Heart right ventricle (tissue), 16 donors: ENCODE measurements at regions of chr3 and their contacts with region 1.

Region 1: DNA sequence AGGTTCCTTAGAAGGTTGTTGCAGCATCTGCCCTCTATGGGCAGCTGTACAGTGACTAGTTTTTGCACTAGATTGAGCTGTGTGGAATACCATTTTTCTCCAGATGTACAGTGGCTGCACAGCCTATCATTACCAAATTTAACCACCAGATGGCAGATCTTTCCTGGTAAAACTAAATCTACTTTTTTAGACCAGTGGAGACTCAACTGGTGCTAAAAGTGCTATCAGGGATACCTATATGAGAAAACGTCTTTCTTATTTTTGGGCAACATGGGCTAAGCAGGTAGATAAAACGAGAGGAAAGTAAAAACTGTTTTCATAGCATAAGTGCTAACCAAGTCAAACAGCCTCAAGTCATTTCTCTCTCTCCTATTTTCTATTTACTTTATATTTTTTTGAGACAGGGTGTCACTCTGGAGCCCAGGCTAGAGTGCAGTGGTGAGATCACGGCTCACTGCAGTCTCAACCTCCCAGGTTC is 21.2 kb downstream of the IGSF10 start:
- DNase-seq: peak in 1 of 2 donors; percentile 28
- ATAC-seq: peak in 7 of 8 donors; percentile 52 to 87 (median 78)
- H3K4me3 ChIP-seq: no peak overlapping the region
- H3K27ac ChIP-seq: no peak overlapping the region
- H3K4me1 ChIP-seq: peaks cover 0 to under 1% (median 0%) of the 10 kb centered on the region in 9 donors
- H3K27me3 ChIP-seq: no peaks in the 10 kb centered on the region
- CTCF ChIP-seq: peak; percentile 65 to 86 (median 79)

Region 2: DNA sequence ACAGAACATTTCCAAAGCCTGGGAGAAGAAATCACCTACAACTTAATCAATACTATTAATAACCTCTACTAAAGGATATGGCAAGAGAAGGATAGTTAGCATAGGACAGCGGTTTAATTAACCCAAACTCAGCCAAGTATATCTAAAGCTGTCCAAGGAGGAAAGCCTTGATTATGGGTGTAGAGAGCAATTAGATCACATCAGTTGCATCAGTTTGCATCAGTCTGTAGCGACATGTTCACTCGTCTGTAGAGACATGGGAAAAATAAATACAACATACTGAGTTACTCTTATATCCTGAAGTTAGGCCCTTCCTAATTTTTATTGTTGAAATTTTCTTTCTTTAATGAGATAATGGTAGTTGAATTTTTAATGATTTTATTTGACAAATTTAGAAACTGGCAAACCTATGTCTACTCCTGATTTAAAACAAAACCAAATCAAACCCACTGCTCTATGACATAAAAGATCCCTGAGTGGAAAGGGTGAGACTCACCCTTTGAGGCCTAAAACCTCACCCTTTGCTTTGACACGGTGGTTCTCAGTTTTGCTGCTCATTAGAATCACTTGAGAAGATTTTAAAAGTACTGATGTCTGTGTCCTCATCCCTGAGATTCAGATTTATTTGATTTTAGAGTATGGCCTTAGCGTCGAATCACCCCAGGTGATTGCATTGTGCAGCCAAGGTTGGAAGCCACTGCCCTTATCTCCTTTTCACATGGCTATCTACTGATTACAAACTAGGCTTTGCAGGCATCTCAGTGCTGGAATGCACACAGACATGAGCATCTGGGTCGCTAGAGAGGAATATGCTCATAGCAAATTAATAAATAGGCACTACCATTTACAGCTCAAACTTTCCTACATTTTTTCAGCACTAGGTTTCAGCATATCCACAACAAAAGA is 464.4 kb before region 1 on chr3:
- intact Hi-C with region 1: no loop called
- DNase-seq: no peak
- ATAC-seq: no peak
- H3K4me3 ChIP-seq: no peak overlapping the region
- H3K27ac ChIP-seq: no peak overlapping the region
- H3K4me1 ChIP-seq: no peaks in the 10 kb centered on the region
- H3K27me3 ChIP-seq: peaks cover 0 to 18% (median 3%) of the 10 kb centered on the region in 7 donors
- CTCF ChIP-seq: no peak

Region 3: GRCh38 chr3:151660885-151661284 is 221.2 kb after region 1 on chr3:
- intact Hi-C with region 1: loop called in 4 of 10 experiments (anchors 5 to 10 kb)
- DNase-seq: no peak
- ATAC-seq: no peak
- H3K4me3 ChIP-seq: no peak overlapping the region
- H3K27ac ChIP-seq: no peak overlapping the region
- H3K4me1 ChIP-seq: no peaks in the 10 kb centered on the region
- H3K27me3 ChIP-seq: no peaks in the 10 kb centered on the region
- CTCF ChIP-seq: peak in 4 of 9 donors; percentile 10 to 39 (median 34)

Region 4: GRCh38 chr3:151918253-151919029 is 478.8 kb after region 1 on chr3:
- intact Hi-C with region 1: loop called in 9 of 10 experiments (anchors 2 to 10 kb)
- DNase-seq: no peak
- ATAC-seq: peak in 5 of 8 donors; percentile 39 to 65 (median 50)
- H3K4me3 ChIP-seq: no peak overlapping the region
- H3K27ac ChIP-seq: no peak overlapping the region
- H3K4me1 ChIP-seq: peaks cover 0 to under 1% (median 0%) of the 10 kb centered on the region in 9 donors
- H3K27me3 ChIP-seq: no peaks in the 10 kb centered on the region
- CTCF ChIP-seq: peak; percentile 33 to 78 (median 69)

Region 5: DNA sequence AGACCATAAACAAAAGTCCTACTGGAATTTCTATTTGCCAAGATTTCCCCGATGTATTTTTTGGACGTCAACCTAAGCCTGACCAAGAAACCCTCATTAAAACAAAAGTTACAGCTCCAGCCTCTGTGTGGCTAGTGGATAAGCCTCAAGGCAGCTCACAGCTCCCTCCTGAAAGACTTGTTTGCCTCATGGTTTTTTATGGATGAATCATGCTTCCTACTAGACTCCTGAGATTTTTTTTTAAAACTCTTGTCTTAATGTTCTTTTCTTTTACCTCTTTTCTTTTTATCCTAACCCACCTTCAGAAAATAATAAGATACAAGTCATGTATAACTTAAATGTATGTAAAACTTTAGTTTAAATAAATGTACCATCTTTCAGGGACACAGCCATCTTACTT is 486.2 kb after region 1 on chr3:
- intact Hi-C with region 1: loop called in 1 of 10 experiments (anchors 5 kb)
- DNase-seq: no peak
- ATAC-seq: no peak
- H3K4me3 ChIP-seq: no peak overlapping the region
- H3K27ac ChIP-seq: no peak overlapping the region
- H3K4me1 ChIP-seq: peaks cover 0 to 12% (median 0%) of the 10 kb centered on the region in 9 donors
- H3K27me3 ChIP-seq: no peaks in the 10 kb centered on the region
- CTCF ChIP-seq: no peak